Sigmoid colon (tissue), 7 donors: ENCODE measurements at regions of chr9 and their contacts with region 1.

Region 1: GRCh38 chr9:111037381-111038305 is 627 bp downstream of the LPAR1 start:
- DNase-seq: peak; percentile 76
- H3K4me3 ChIP-seq: peak overlapping the region; percentile 39 to 64 (median 57)
- H3K27ac ChIP-seq: peak overlapping the region; percentile 79 to 85 (median 83)
- H3K4me1 ChIP-seq: peaks cover 0 to 18% (median 12%) of the 10 kb centered on the region in 4 donors
- H3K27me3 ChIP-seq: peaks cover 12 to 54% (median 18%) of the 10 kb centered on the region in 3 donors
- CTCF ChIP-seq: no peak
- EP300 ChIP-seq: no peak
- POLR2A ChIP-seq: no peak

Region 2: DNA sequence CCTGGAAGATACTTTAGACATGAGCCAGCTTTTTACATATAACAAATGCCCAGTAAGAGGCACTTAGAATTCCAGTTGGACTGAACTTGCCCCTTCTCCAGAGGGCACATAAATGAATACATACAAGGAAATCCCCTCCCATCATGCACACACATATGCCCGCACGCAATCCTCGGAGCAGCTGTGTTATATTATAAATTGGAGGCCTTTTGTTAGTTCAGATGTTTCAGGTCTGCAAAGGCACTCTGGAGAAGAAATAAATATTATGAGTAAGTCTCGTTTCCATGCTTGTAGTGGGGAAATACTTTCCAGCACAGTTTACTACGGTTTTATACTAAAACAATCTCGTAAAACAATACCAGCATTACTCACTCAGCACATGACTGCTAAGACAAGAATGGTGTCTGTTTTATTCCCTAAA is 386.6 kb before region 1 on chr9:
- intact Hi-C with region 1: loop called (anchors 10 kb)
- DNase-seq: no peak
- H3K4me3 ChIP-seq: no peak overlapping the region
- H3K27ac ChIP-seq: peak overlapping the region; percentile 42 to 67 (median 59)
- H3K4me1 ChIP-seq: peaks cover 0 to 26% (median 18%) of the 10 kb centered on the region in 4 donors
- H3K27me3 ChIP-seq: no peaks in the 10 kb centered on the region
- CTCF ChIP-seq: no peak
- EP300 ChIP-seq: peak in 1 of 4 donors; percentile 37
- POLR2A ChIP-seq: no peak

Region 3: DNA sequence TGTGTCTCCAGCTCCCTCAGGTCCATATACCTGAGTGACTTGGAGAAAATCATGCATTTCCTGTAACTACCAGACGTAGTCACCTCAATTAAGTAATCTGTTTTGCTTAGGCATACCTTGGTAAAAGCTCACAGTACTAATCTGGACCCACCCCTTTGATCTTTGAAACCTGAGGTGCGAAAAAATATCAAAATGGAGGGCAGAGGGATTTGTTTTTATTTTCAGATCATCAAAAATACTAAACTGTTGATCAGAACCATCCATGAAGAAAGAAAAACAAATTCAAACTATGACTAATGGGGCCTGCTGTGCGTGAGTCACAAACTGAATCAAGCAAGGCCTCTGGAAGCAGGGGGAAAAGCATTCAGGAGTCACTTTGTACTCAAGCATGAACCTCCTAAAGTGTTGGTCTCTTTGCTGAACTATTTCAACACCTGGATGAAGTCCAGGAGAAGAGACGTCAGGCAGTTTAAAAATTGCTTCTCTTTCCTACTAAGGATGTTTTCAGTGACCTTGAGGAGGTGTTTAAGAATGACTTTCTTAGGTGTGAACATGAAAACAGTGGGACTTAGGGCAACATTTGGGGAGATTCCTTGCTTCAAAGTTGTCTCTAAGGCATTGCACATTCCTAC is 292.8 kb before region 1 on chr9:
- intact Hi-C with region 1: loop called (anchors 10 kb)
- DNase-seq: peak; percentile 83
- H3K4me3 ChIP-seq: no peak overlapping the region
- H3K27ac ChIP-seq: peak overlapping the region; percentile 50 to 74 (median 70)
- H3K4me1 ChIP-seq: peaks cover 0 to 41% (median 31%) of the 10 kb centered on the region in 4 donors
- H3K27me3 ChIP-seq: no peaks in the 10 kb centered on the region
- CTCF ChIP-seq: no peak
- EP300 ChIP-seq: no peak
- POLR2A ChIP-seq: no peak

Region 4: DNA sequence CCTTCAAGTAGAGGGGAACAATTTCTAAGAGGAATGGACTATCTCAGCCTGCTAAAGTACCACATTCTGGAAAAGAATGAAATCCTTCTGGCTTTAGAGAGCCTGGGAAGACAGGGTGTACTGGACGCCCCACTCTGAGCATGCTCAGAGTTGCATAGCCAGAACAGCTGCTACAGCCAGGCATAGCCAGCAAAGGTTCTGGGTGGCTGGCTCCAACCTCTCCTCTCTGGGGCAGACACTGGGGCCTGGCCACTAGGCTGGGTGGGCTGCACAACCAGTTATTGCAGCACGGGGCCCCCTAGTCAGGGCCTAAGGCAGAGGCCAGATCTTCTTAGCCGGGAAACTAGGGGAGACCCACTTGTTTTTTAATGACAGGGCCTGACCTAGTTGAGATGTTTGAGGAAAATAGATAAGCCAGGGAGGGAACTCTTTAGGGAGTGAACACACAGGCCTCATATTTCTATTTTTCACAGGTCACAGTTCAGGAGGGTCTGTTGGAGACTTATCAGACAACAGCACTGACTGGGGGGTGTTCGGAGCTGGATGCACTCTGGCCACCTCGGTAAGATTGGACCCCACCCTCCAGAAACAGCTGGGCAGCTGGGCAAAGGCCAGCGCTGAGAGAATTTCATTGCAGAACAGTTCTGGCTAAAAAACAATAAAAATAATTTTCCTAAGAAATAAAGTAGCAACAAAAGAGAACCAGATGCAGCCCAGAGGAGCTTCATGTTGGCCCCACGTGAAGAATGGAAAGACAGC is 142.3 kb before region 1 on chr9:
- intact Hi-C with region 1: loop called (anchors 10 kb)
- DNase-seq: peak; percentile 81
- H3K4me3 ChIP-seq: no peak overlapping the region
- H3K27ac ChIP-seq: peak overlapping the region; percentile 10 to 64 (median 57)
- H3K4me1 ChIP-seq: no peaks in the 10 kb centered on the region
- H3K27me3 ChIP-seq: no peaks in the 10 kb centered on the region
- CTCF ChIP-seq: no peak
- EP300 ChIP-seq: no peak
- POLR2A ChIP-seq: no peak

Region 5: GRCh38 chr9:111078391-111079038 is 40.9 kb after region 1 on chr9:
- intact Hi-C with region 1: no loop called
- DNase-seq: no peak
- H3K4me3 ChIP-seq: no peak overlapping the region
- H3K27ac ChIP-seq: no peak overlapping the region
- H3K4me1 ChIP-seq: no peaks in the 10 kb centered on the region
- H3K27me3 ChIP-seq: no peaks in the 10 kb centered on the region
- CTCF ChIP-seq: no peak
- EP300 ChIP-seq: no peak
- POLR2A ChIP-seq: no peak

Region 6: GRCh38 chr9:111298731-111299598 is 261.3 kb after region 1 on chr9:
- intact Hi-C with region 1: loop called (anchors 5 kb)
- DNase-seq: peak; percentile 85
- H3K4me3 ChIP-seq: no peak overlapping the region
- H3K27ac ChIP-seq: peak overlapping the region; percentile 35 to 45 (median 42)
- H3K4me1 ChIP-seq: peaks cover 0 to 7% (median 0%) of the 10 kb centered on the region in 4 donors
- H3K27me3 ChIP-seq: no peaks in the 10 kb centered on the region
- CTCF ChIP-seq: peak; percentile 64 to 82 (median 74)
- EP300 ChIP-seq: peak in 1 of 4 donors; percentile 2
- POLR2A ChIP-seq: no peak